Activated CD8-positive, alpha-beta T cell treated with anti-CD3 and anti-CD28 coated beads, Interleukin-2, amount 10 ng/mL, durations not matched to agents 7 days and 5 days (primary cell): ENCODE measurements at regions of chr4 and their contacts with region 1.

Region 1: DNA sequence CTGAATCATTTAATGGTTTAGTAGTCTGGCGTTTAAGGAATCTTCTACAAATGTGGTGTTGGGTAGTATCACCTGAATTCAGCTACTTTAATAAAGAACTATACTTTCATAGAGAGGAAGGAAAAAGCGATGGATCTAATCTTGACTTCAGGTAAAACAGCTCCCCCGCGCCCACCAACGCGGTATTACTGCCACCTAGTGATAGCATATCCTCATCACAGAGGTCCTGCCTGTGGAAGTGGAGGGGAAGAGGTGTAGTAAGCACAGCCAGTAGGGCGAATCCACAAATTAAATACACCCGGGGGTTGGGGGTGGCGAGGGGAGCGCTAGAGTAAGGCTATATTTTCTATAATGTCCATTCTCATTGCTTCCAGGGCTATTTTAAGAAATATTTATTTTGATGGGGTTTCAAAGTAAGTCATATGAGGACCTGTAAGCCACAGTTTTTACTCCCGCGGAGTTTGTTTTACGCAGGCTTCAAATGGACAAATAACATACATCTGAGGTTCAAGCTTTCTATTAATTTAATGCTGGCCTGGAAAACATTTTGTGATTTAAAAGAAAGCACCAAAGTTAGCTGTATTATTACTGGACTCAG is 8.3 kb upstream of the DAPP1 start:
- DNase-seq: peak; percentile 80
- ATAC-seq: peak; percentile 97
- H3K4me3 Mint-ChIP-seq: no peak overlapping the region
- H3K27ac Mint-ChIP-seq: no peak overlapping the region
- H3K4me1 Mint-ChIP-seq: peaks cover 14% of the 10 kb centered on the region
- H3K27me3 Mint-ChIP-seq: peaks cover 10% of the 10 kb centered on the region

Region 2: GRCh38 chr4:99563310-99564186 is 244.8 kb before region 1 on chr4 and contains the start of gene TRMT10A:
- CTCF ChIA-PET with region 1: interaction called, 46 read pairs
- POLR2A ChIA-PET with region 1: interaction called, 5 read pairs
- DNase-seq: peak; percentile 97
- ATAC-seq: peak; percentile 95
- H3K4me3 Mint-ChIP-seq: peak within 1 kb of the TSS; percentile 89
- H3K27ac Mint-ChIP-seq: peak within 1 kb of the TSS; percentile 98
- H3K4me1 Mint-ChIP-seq: peaks cover 25% of the 10 kb centered on the region
- H3K27me3 Mint-ChIP-seq: peaks cover 19% of the 10 kb centered on the region
- total RNA-seq, gene TRMT10A: 7.4 to 8.2 TPM

Region 3: GRCh38 chr4:99872570-99872969 is 64.2 kb after region 1 on chr4:
- CTCF ChIA-PET with region 1: interaction called, 10 read pairs
- POLR2A ChIA-PET with region 1: no interaction called
- DNase-seq: no peak
- ATAC-seq: no peak
- H3K4me3 Mint-ChIP-seq: no peak overlapping the region
- H3K27ac Mint-ChIP-seq: no peak overlapping the region
- H3K4me1 Mint-ChIP-seq: no peaks in the 10 kb centered on the region
- H3K27me3 Mint-ChIP-seq: no peaks in the 10 kb centered on the region

Region 4: GRCh38 chr4:99894161-99894997 is 86.0 kb after region 1 on chr4 and contains the start of gene LAMTOR3:
- CTCF ChIA-PET with region 1: interaction called, 11 read pairs
- POLR2A ChIA-PET with region 1: no interaction called
- DNase-seq: peak; percentile 94
- ATAC-seq: peak; percentile 99
- H3K4me3 Mint-ChIP-seq: peak within 1 kb of the TSS; percentile 96
- H3K27ac Mint-ChIP-seq: peak within 1 kb of the TSS; percentile 96
- H3K4me1 Mint-ChIP-seq: peaks cover 38% of the 10 kb centered on the region
- H3K27me3 Mint-ChIP-seq: no peaks in the 10 kb centered on the region
- total RNA-seq, gene LAMTOR3: 26.8 to 28.8 TPM